MCF 10A (cell line): ENCODE measurements at regions of chr12 and their contacts with region 1.

Region 1: DNA sequence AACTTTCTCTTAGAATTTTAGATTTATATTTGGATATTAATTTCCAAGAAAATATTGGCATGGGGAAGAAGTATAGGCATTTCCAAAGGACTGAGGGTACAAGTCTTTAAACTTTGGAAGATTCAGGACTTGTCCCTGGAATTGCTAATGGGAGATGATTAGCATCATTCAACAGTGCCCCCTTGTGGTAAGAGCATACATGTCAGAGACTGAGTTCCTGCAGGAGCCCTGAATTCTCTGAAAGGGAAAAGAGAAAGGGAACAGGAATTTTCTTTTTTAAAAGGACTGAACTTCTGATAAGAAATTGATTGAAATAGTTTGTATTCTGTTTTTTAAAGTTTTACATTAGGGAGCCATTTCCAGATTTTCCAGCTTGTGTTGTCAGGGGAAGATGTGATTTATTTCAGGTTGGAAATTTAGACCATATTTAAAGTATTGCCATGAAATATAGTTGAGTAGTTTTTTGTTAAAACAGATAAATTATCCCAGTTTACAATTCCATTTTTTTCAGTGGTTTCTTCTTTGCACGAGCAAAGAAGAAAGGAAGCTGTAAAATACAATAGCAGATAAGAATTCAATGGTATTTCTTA is 44.0 kb upstream of the REP15 start:
- DNase-seq: peak; percentile 87
- H3K4me3 Mint-ChIP-seq: no peak overlapping the region
- H3K27ac Mint-ChIP-seq: no peak overlapping the region
- H3K4me1 Mint-ChIP-seq: no peaks in the 10 kb centered on the region
- H3K27me3 Mint-ChIP-seq: no peaks in the 10 kb centered on the region
- CTCF ChIP-seq: peak; percentile 82

Region 2: GRCh38 chr12:27383429-27384260 is 268.6 kb before region 1 on chr12:
- CTCF ChIA-PET with region 1: interaction called, 12 read pairs
- POLR2A ChIA-PET with region 1: no interaction called
- intact Hi-C with region 1: no loop called
- DNase-seq: peak; percentile 88
- H3K4me3 Mint-ChIP-seq: no peak overlapping the region
- H3K27ac Mint-ChIP-seq: peak overlapping the region; percentile 68
- H3K4me1 Mint-ChIP-seq: no peaks in the 10 kb centered on the region
- H3K27me3 Mint-ChIP-seq: no peaks in the 10 kb centered on the region
- CTCF ChIP-seq: peak; percentile 76

Region 3: GRCh38 chr12:27424631-27425230 is 227.5 kb before region 1 on chr12:
- CTCF ChIA-PET with region 1: interaction called, 21 read pairs
- POLR2A ChIA-PET with region 1: interaction called, 7 read pairs
- intact Hi-C with region 1: loop called (anchors 1 kb)
- DNase-seq: peak; percentile 54
- H3K4me3 Mint-ChIP-seq: no peak overlapping the region
- H3K27ac Mint-ChIP-seq: no peak overlapping the region
- H3K4me1 Mint-ChIP-seq: no peaks in the 10 kb centered on the region
- H3K27me3 Mint-ChIP-seq: no peaks in the 10 kb centered on the region
- CTCF ChIP-seq: peak; percentile 45

Region 4: GRCh38 chr12:27434673-27435565 is 217.3 kb before region 1 on chr12:
- CTCF ChIA-PET with region 1: interaction called, 42 read pairs
- POLR2A ChIA-PET with region 1: interaction called, 3 read pairs
- intact Hi-C with region 1: loop called (anchors 5 kb)
- DNase-seq: peak; percentile 19
- H3K4me3 Mint-ChIP-seq: no peak overlapping the region
- H3K27ac Mint-ChIP-seq: no peak overlapping the region
- H3K4me1 Mint-ChIP-seq: peaks cover 7% of the 10 kb centered on the region
- H3K27me3 Mint-ChIP-seq: no peaks in the 10 kb centered on the region
- CTCF ChIP-seq: peak; percentile 57

Region 5: DNA sequence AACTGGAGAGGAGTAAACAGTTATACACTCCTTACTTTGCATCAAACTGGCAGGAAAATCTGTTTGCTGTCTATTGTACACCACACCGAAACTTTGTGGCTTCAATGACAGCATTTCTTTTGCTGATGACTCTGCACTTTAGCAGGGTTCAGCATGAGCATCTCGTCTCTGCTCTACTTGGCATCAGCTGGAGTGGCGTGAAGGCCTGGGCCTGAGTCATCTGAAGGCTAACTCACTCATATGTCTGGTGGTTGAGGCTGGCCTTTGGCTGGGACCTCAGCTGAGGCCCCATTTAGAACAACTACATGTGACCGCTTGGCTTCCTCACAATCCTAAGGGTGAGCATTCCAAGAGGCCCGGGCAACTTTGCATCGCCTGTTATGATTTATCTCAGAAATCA is 15.3 kb after region 1 on chr12:
- CTCF ChIA-PET with region 1: interaction called, 22 read pairs
- POLR2A ChIA-PET with region 1: no interaction called
- intact Hi-C with region 1: no loop called
- DNase-seq: no peak
- H3K4me3 Mint-ChIP-seq: no peak overlapping the region
- H3K27ac Mint-ChIP-seq: no peak overlapping the region
- H3K4me1 Mint-ChIP-seq: no peaks in the 10 kb centered on the region
- H3K27me3 Mint-ChIP-seq: no peaks in the 10 kb centered on the region
- CTCF ChIP-seq: no peak

Region 6: DNA sequence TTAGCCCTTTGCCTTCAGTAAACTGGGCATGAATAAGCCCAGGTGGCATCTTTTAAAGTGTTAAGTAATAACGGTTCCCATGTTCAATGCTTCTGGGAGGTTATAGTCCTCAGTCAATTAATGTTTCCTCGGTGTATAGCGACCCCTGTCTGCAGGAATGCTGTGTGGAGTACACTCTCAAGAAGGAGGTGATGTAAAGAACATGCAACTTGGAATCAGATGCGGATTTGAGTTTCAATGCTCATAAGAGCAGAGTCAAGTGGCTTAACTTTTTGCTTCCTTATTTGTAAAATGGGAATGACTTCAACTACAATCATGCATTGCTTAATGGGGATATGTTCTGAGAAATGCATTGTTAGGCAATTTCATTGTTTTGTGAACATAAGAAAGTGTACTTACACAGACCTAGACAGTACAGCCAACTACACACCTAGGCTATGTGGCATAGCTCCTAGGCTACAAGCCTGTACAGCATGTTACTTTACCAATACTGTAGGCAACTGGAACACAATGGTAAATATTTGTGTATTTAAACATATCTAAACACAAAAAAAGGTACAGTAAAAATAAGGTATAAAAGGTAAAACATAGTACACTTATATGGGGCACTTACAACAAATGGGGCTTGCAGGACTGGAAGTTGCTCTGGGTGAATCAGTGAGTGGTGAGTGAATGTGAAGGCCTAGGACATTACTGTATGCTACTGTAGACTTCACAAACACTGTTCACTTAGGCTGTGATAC is 51.6 kb after region 1 on chr12:
- CTCF ChIA-PET with region 1: interaction called, 3 read pairs
- POLR2A ChIA-PET with region 1: interaction called, 3 read pairs
- intact Hi-C with region 1: loop called (anchors 1 kb)
- DNase-seq: peak; percentile 88
- H3K4me3 Mint-ChIP-seq: no peak overlapping the region
- H3K27ac Mint-ChIP-seq: peak overlapping the region; percentile 51
- H3K4me1 Mint-ChIP-seq: peaks cover 6% of the 10 kb centered on the region
- H3K27me3 Mint-ChIP-seq: no peaks in the 10 kb centered on the region
- CTCF ChIP-seq: peak; percentile 88